Activated T-helper 2 cell treated with anti-CD3 and anti-CD28 coated beads, Interferon-gamma antibody, Interleukin-2, Interleukin-4, amounts not matched to agents 10 μg/mL and 5 μg/mL and 100 μg/mL, durations not matched to agents 14 hours and 24 hours and 36 hours (primary cell): ENCODE measurements at regions of chr5 and their contacts with region 1.

Region 1: DNA sequence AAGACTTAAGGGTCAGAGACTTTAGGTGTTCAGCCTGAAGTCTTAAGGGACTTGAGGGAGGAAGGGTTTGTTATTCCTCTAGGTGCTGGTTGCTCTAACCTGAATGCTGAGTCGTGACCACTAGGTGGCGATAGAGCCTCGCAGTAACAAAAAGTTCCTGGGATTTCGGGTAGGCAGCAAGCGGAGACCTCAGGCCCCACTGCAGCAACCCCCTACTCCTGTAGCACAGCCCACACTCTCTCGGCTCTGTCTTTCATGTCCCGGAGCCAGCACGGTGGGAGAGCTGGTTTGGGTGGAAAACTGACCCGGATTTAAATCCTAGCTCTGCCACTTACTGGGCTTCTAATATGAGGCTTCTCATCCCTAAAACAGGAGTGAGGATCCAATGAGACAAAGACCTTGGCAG is 100.3 kb upstream of the PANK3 start:
- DNase-seq: peak; percentile 42
- H3K4me3 Mint-ChIP-seq: no peak overlapping the region
- H3K27ac Mint-ChIP-seq: no peak overlapping the region
- H3K4me1 Mint-ChIP-seq: peaks cover 21% of the 10 kb centered on the region
- H3K27me3 Mint-ChIP-seq: no peaks in the 10 kb centered on the region

Region 2: GRCh38 chr5:168592014-168592418 is 87.5 kb before region 1 on chr5:
- intact Hi-C with region 1: no loop called
- DNase-seq: no peak
- H3K4me3 Mint-ChIP-seq: no peak overlapping the region
- H3K27ac Mint-ChIP-seq: no peak overlapping the region
- H3K4me1 Mint-ChIP-seq: no peaks in the 10 kb centered on the region
- H3K27me3 Mint-ChIP-seq: peaks cover 25% of the 10 kb centered on the region

Region 3: DNA sequence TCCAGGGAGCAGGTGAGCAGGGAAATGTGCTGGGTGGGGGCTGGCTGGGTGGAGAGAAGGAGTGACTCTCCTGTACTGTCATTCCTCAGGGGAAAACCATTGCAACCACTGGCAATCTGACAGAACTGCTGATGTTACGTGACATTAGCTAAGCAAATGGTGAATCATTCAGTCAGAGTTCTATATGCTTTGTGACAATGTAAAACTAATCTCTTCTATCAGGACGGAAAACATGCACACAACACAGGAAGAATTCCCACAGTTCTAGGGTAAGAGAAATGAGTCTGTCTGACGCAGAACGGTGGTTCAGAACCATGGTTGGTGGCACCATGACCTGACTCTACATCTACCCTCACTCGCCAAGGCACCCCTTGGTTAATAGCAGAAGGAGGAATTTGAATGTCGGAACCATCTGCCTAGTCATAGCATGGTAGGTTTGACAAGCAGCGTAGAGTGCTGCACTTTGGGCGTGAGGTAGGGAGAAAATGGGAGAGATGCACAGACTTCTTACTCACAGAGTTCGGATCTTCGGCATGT is 143.3 kb after region 1 on chr5:
- intact Hi-C with region 1: loop called (anchors 2 kb)
- DNase-seq: no peak
- H3K4me3 Mint-ChIP-seq: peak overlapping the region; percentile 65
- H3K27ac Mint-ChIP-seq: peak overlapping the region; percentile 94
- H3K4me1 Mint-ChIP-seq: peaks cover 33% of the 10 kb centered on the region
- H3K27me3 Mint-ChIP-seq: no peaks in the 10 kb centered on the region

Region 4: DNA sequence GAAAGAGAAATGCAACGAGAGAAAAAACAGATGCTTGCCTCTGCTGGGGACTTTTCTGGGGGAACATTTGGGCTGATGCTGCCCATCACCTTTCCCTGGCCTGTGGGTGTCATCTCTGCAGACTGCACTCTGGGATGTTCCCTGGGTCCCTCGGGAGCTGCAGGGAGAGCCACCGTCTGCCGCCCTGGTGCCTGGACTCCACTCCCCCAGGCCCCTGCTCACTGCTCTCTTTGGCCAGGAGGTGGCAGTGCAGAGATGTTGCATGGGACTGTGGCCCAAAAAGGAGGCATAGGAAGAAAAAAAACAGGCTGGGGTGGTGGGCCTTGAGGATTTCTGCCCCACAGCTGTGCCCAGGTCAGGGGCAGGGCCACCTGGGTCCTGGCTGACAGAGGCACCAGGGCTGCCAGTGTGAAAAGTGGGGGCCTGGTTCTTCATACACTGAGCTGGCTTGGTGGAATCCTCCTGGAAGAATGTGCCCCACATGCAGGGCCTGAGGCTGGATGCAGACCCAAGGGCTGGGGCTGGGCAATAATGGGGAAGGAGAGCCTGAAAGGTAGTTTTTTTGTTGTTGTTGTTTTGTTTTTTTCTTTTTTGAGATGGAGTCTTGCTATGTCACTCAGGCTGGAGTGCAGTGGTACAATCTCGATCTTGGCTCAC is 267.8 kb after region 1 on chr5:
- intact Hi-C with region 1: loop called (anchors 2 kb)
- DNase-seq: peak; percentile 12
- H3K4me3 Mint-ChIP-seq: no peak overlapping the region
- H3K27ac Mint-ChIP-seq: no peak overlapping the region
- H3K4me1 Mint-ChIP-seq: peaks cover 17% of the 10 kb centered on the region
- H3K27me3 Mint-ChIP-seq: no peaks in the 10 kb centered on the region

Region 5: GRCh38 chr5:169302491-169303118 is 623.1 kb after region 1 on chr5:
- intact Hi-C with region 1: loop called (anchors 1 kb)
- DNase-seq: peak; percentile 39
- H3K4me3 Mint-ChIP-seq: no peak overlapping the region
- H3K27ac Mint-ChIP-seq: no peak overlapping the region
- H3K4me1 Mint-ChIP-seq: peaks cover 10% of the 10 kb centered on the region
- H3K27me3 Mint-ChIP-seq: peaks cover 54% of the 10 kb centered on the region